ENCODE measurements at regions of chr10 and their contacts with region 1.

Region 1: GRCh38 chr10:98170249-98171117 is 36.0 kb downstream of the R3HCC1L start:
- DNase-seq: no peak

Region 2: GRCh38 chr10:97943294-97943693 is 227.2 kb before region 1 on chr10:
- intact Hi-C with region 1: no loop called
- DNase-seq: no peak

Region 3: DNA sequence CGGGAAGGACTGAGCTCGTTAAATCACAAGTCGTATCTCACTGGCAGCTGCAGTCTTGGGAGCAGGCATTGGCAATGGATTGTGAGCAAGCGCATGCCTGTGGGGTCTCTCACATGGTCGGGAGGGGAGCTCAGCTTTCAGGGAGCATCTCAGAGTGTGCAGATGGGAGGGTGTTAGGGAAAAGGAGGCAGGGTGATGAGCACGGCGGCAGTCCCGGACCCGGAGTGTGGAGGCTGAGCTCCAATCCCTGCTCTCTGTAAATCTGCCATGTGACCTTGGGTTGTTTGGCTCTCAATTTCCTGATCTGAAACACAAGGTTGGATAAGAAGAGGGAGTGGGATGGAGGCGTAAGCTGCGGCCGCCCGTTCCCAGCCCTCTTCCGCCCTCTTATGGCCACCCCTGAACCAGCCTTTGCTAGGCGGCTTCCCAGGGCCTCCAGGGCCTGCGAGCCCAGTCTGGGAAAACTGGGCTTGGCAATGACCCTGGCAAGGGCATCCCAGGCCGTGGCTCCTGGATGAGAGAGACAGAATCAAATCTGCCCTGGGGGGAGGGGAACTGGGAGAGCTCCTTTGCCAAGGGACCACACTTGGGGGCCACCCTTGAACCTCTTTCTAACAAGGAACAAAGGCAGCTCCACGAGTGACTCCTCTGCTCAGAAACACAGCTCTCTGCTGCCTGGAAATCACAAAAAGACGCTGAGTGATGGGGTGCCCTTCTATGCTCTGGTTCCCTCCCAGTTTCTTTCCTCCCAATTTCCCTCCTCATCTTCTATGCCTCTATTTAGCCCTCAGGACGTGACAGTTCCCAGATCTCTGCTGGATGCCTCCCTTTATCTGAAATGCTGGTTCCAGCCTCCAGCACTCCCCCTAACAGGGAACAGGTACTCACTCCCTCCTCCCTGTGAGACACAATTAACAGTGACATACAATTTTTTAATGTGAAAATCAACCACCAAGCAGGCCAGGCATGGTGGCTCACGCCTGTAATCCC is 139.2 kb after region 1 on chr10:
- intact Hi-C with region 1: loop called (anchors 10 kb)
- DNase-seq: peak; percentile 81

Region 4: GRCh38 chr10:98391578-98391991 is 221.1 kb after region 1 on chr10:
- intact Hi-C with region 1: loop called (anchors 10 kb)
- DNase-seq: no peak